ENCODE measurements at regions of chr4 and their contacts with region 1.

Region 1: DNA sequence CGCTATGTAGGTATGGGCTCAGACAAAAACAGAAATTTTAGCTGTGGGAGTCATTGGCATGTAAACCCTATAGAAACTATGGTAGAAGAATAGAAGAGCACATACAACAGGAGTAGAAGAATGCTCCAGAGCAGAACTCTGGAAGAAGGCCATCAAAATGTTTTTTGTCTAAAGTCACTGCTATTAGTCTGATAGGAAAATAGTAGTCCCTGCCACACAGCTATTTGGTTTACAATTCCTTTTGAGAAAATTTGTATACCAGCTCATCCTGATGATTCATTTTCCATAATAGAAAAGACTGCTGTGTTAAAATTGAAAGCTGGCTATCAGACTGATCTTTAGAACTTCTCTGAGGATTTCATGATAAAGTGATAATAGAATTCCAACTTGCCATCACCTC is 32.8 kb upstream of the ADAD1 start:
- DNase-seq: no peak
- ATAC-seq: no peak
- H3K4me3 ChIP-seq: no peak overlapping the region
- H3K27ac ChIP-seq: no peak overlapping the region
- H3K4me1 ChIP-seq: peaks cover 0 to 4% of the 10 kb centered on the region in 2 donors
- H3K27me3 ChIP-seq: no peaks in the 10 kb centered on the region

Region 2: DNA sequence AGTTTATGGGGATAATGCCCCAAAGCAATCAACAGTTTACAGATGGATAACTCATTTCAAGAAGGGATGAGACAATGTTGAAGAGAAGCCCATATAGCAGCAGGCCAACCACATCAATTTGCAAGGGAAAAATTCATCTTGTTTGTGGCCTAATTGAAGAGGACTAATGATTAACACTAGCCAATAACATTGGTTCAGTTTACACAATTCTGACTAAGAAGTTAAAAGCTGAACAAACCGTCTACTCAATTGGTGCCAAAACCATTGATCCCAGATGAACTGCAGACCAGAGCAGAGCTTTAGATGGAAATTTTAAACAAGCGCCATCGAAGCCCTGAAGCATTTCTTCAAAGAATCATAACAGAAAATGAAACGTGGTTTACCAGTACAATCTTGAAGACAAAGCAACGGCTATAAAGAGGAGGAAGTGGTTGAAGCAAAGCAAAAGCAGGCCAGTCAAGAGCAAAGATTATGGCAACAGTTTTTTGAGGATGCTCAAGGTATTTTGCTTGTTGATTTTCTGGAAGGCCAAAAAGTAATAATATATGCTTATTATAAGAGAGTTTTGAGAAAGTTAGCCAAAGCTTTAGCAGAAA is 214.4 kb before region 1 on chr4:
- intact Hi-C with region 1: no loop called
- DNase-seq: no peak
- ATAC-seq: no peak
- H3K4me3 ChIP-seq: no peak overlapping the region
- H3K27ac ChIP-seq: no peak overlapping the region
- H3K4me1 ChIP-seq: no peaks in the 10 kb centered on the region
- H3K27me3 ChIP-seq: no peaks in the 10 kb centered on the region

Region 3: GRCh38 chr4:122252584-122252983 is 93.5 kb before region 1 on chr4:
- intact Hi-C with region 1: loop called in 1 of 2 experiments (anchors 5 kb)
- DNase-seq: no peak
- ATAC-seq: no peak
- H3K4me3 ChIP-seq: no peak overlapping the region
- H3K27ac ChIP-seq: no peak overlapping the region
- H3K4me1 ChIP-seq: no peaks in the 10 kb centered on the region
- H3K27me3 ChIP-seq: no peaks in the 10 kb centered on the region

Region 4: DNA sequence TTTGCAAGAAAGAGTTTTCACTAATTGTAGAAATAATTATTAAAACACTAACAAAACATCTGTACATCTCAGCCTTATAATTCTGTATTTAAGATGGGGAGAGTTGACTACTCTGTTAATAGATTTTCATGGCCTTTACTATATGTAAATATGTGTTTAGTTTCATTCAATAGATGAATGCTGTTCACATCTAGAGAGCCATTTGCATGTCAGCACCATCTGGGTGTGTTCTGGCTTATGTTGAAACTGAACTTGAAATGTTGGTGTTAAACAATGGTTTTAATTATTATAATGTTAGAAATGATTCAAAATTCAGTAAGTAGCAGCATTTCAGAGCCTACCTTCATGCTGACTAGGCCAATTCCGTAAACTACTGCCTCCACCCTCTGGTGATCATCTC is 69.7 kb before region 1 on chr4:
- intact Hi-C with region 1: no loop called
- DNase-seq: no peak
- ATAC-seq: no peak
- H3K4me3 ChIP-seq: no peak overlapping the region
- H3K27ac ChIP-seq: no peak overlapping the region
- H3K4me1 ChIP-seq: no peaks in the 10 kb centered on the region
- H3K27me3 ChIP-seq: no peaks in the 10 kb centered on the region

Region 5: DNA sequence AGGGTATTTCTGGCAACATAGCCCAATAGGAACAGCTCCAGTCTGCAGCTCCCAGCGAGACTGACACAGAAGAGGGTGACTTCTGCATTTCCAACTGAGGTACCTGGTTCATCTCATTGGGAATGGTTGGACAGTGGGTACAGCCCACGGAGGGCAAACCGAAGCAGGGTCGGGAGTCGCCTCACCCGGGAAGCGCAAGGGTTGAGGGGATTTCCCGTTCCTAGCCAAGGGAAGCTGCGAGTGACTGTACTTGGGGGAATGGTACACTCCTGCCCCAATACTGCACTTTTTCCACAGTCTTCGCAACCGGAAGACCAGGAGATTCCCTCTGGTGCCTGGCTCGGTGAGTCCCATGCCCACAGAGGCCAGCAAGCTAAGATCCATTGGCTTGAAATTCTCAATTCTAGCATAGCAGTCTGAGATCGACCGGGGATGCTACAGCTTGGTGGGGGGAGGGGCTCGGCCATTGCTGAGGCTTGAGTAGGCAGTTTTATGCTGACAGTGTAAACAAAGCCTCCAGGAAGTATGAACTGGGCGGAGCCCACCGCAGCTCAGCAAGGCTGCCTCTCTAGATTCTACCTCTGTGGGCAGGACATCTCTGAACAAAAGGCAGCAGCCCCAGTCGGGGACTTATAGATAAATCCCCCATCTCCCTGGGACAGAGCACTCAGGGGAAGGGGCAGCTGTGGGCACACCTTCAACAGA is 18.8 kb after region 1 on chr4:
- intact Hi-C with region 1: no loop called
- DNase-seq: peak in 1 of 2 donors; percentile 65
- ATAC-seq: no peak
- H3K4me3 ChIP-seq: no peak overlapping the region
- H3K27ac ChIP-seq: no peak overlapping the region
- H3K4me1 ChIP-seq: no peaks in the 10 kb centered on the region
- H3K27me3 ChIP-seq: no peaks in the 10 kb centered on the region